ENCODE measurements at regions of chr19 and their contacts with region 1.

Region 1: DNA sequence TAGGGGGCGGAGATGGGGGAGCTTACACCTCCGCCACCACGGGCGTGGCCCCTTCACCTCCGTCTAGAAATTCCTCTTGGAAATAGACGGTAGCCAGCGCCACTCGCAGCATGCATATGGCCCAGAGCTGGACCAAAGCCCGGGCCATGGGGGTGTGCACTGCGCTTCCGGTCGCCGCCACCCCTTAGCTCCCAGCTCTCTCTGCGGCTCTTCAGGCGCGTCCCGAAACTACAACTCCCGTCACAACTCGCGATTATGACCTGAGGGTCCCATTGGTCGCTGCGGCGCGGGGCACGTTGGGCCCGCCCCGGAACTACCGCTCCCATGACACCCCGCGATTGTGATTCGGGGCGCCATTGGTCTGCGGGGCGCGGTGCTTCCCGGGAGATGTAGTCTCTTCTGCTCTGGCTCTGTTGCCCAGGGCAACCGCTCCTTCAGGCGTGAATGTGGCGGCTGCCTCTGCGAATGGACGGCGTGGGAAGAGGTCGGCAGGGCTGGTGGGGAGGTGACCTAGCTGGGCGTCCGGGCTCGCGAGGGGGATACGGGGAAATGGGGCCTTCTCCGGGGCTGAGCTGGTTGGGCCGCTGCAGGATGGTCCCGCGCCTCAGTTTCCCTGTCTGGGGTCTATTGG is at the starts of genes C19orf44 and CALR3:
- DNase-seq: peak; percentile 99
- H3K4me3 ChIP-seq: peak within 1 kb of the TSS; percentile 72 to 75 (median 74)
- H3K27ac ChIP-seq: peak within 1 kb of the TSS; percentile 82 to 89 (median 86)
- H3K4me1 ChIP-seq: peaks cover 0 to 13% (median 11%) of the 10 kb centered on the region in 4 donors
- H3K27me3 ChIP-seq: no peaks in the 10 kb centered on the region
- CTCF ChIP-seq: peak in 2 of 4 experiments; percentile 12 to 20
- EP300 ChIP-seq: peak in 1 of 4 donors; percentile 4
- POLR2A ChIP-seq: no peak
- total RNA-seq, gene C19orf44: 3.8 to 10.0 (median 5.7) TPM
- total RNA-seq, gene CALR3: not detected

Region 2: DNA sequence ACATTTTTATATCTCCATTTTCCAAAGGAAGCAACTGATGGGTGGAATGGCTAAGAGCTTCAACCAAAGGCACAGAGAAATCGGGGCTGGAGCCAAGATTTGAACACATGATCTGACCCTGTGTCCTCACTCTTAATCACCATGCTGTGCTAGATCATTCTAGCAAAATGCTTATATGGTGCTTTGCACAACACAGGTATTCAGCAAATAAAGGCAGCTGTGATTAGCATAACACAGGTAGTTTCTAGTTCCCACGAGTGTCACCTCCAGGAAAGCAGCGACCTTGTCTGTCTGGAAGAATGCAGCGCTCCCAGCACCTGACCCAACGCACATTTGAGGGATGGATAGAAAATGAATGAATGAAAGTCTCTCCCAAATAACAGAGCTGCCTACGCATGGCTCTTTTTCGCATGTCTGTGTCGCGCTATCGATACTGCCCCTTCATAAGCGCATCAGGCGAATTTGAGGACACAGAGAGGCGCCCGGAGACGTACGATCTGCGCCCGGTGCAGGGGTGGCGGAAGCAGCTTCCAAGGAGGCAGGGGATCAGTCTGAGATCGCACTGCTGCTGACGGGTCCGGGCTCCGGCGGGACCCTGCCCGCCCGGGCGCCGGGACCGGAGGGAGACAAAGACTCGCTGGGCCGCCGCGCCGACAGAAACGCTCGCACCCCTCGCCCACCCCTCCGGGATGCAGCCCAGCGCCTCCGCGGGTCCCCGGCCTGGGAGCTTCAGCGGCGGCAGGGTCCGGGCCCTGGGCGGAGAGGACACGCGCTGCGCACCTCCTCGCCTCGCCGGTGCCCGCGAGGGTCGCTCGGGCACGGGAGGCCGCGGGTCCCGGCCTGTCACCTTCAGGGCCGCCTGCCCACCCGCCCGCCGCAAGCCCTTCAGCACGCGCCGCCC is 24.9 kb before region 1 on chr19:
- intact Hi-C with region 1: loop called (anchors 1 kb)
- DNase-seq: no peak
- H3K4me3 ChIP-seq: peak overlapping the region; percentile 48 to 99 (median 92)
- H3K27ac ChIP-seq: peak overlapping the region; percentile 90 to 94 (median 91)
- H3K4me1 ChIP-seq: peaks cover 0 to 39% (median 26%) of the 10 kb centered on the region in 4 donors
- H3K27me3 ChIP-seq: no peaks in the 10 kb centered on the region
- CTCF ChIP-seq: no peak
- EP300 ChIP-seq: no peak
- POLR2A ChIP-seq: no peak

Region 3: DNA sequence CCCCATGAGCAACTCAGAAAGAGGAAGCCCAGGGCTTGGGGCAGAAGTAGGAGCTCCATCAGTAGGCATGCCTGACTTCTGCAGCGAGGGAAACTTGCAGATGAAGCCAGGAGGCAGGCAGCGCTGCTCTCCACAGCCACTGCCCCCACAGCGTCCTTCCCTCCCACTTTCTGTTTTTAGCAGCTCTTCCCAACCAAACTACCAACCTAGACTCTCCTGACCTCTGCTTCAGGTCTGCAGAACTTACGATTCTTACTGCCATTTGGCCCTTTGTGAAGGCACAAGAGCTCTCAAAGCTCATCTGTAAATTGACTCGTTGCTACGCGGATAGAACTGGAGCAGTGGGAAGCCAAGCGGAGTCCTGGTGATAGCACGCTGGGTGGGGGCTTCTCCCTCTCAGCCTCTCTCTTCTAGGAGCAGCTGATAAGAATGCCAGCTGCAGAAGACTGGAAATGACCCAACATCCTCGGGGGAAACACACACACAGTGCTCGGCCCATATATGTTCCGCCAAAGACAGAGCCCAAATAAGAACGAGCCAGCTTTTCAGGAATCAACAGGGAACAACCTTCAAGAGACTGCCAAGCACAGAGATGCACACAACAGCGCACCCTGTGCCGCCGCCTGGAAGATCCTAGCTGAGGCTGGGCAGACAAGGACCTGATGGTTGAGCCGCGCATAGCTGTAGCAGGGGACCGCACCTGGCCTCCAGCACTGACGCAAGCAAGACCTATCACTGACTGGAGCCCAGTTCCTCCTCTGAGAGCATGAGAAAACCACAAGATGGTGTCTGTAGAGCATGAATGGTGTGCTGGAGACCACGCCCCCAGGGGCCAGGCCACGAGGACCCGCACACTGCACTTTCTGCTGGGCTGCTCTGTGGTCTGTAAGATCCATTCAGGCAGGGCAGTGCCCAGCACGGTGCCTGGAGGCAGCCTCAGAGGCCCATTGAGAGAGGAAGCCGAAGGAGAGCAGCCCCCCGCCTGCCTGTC is 92.0 kb after region 1 on chr19:
- intact Hi-C with region 1: no loop called
- DNase-seq: no peak
- H3K4me3 ChIP-seq: peak overlapping the region in 3 of 4 donors; percentile 7 to 28 (median 26)
- H3K27ac ChIP-seq: peak overlapping the region; percentile 10 to 72 (median 64)
- H3K4me1 ChIP-seq: peaks cover 0 to 86% (median 66%) of the 10 kb centered on the region in 4 donors
- H3K27me3 ChIP-seq: no peaks in the 10 kb centered on the region
- CTCF ChIP-seq: no peak
- EP300 ChIP-seq: no peak
- POLR2A ChIP-seq: no peak